HAP-1 (cell line): ENCODE measurements at regions of chr4 and their contacts with region 1.

Region 1: GRCh38 chr4:119628308-119629141 is at the start of gene PDE5A:
- DNase-seq: peak; percentile 82 to 91
- H3K4me3 ChIP-seq: peak within 1 kb of the TSS; percentile 56
- H3K4me1 ChIP-seq: peaks cover 8% of the 10 kb centered on the region
- H3K27me3 ChIP-seq: no peaks in the 10 kb centered on the region

Region 2: GRCh38 chr4:120049732-120050494 is 421.4 kb after region 1 on chr4:
- in situ Hi-C with region 1: loop called (anchors 25 kb)
- DNase-seq: peak in 1 of 2 experiments; percentile 88
- H3K4me3 ChIP-seq: no peak overlapping the region
- H3K4me1 ChIP-seq: no peaks in the 10 kb centered on the region
- H3K27me3 ChIP-seq: no peaks in the 10 kb centered on the region